AG04450 (cell line): ENCODE measurements at regions of chr3 and their contacts with region 1.

Region 1: GRCh38 chr3:48439820-48440589 is at the starts of genes CCDC51 and TMA7:
- DNase-seq: peak; percentile 77
- H3K4me3 ChIP-seq: peak within 1 kb of the TSS; percentile 91
- H3K27ac ChIP-seq: peak within 1 kb of the TSS; percentile 65
- H3K27me3 ChIP-seq: no peaks in the 10 kb centered on the region
- CTCF ChIP-seq: no peak
- polyA plus RNA-seq, gene CCDC51: 9.5 and 11.1 TPM in 2 replicates
- polyA plus RNA-seq, gene TMA7: 207 and 316 TPM in 2 replicates

Region 2: DNA sequence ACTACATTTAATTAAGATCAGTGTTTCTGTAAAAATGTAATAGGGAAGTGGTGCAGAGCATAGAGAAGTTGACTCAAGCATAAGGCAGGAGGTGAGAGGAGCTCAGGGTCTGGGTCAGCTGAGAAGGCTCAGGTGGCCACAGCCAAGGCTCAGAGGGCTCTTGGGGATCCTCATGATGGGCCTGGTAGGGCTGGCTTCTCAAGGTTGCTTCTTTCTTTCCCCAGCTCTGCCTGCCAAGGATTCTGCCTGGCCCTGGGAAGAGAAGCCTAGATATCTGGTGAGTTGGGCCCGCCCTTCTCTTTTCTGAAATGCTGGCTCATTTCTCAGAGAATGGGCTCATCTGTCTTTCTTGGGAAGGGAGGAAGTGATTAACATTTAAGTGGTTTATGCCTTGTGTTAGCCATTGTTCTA is 192.6 kb before region 1 on chr3:
- CTCF ChIA-PET with region 1: interaction called, 13 read pairs
- POLR2A ChIA-PET with region 1: no interaction called
- DNase-seq: no peak
- H3K4me3 ChIP-seq: no peak overlapping the region
- H3K27ac ChIP-seq: no peak overlapping the region
- H3K27me3 ChIP-seq: no peaks in the 10 kb centered on the region
- CTCF ChIP-seq: no peak

Region 3: GRCh38 chr3:48285132-48285531 is 154.9 kb before region 1 on chr3:
- CTCF ChIA-PET with region 1: interaction called, 100 read pairs
- POLR2A ChIA-PET with region 1: no interaction called
- DNase-seq: no peak
- H3K4me3 ChIP-seq: no peak overlapping the region
- H3K27ac ChIP-seq: no peak overlapping the region
- H3K27me3 ChIP-seq: no peaks in the 10 kb centered on the region
- CTCF ChIP-seq: no peak

Region 4: GRCh38 chr3:48388966-48389365 is 51.0 kb before region 1 on chr3:
- CTCF ChIA-PET with region 1: interaction called, 12 read pairs
- POLR2A ChIA-PET with region 1: no interaction called
- DNase-seq: no peak
- H3K4me3 ChIP-seq: no peak overlapping the region
- H3K27ac ChIP-seq: no peak overlapping the region
- H3K27me3 ChIP-seq: peaks cover 26% of the 10 kb centered on the region
- CTCF ChIP-seq: no peak

Region 5: DNA sequence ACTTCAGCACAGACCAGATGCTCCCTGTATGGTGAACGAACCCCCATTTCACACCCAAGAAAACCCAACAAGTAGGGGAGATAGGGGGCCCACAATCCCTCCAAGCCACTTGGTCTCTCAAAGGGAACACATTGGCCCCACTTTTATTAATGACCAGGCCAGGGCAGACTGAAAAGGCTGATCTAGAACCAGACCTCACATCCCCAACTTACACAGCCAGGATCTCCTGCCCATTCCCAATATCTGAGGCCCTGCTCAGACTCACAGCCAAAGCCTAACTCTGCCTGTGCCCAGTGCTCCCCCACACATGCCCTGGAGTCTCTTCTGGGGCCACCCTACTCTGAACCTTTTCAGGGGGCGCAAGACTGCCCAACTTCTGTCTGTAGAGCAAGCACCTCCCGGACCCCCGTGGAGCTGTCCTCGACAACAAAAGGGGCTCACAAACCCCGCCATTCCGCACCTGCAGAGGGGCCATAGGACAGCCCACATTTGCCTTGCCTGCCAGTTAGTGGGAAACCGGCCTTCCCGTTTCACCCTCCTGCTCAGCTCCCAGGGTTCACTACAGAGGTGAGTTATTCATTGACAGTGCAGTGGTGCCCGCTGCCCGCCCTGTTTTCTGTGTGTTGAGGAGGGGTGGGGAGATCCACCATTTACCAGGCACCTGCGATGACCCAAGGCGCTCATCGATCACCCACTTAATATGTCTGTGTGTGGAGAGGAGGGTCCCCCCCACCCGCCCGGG is 11.7 kb before region 1 on chr3:
- CTCF ChIA-PET with region 1: interaction called, 47 read pairs
- POLR2A ChIA-PET with region 1: no interaction called
- DNase-seq: no peak
- H3K4me3 ChIP-seq: peak overlapping the region; percentile 70
- H3K27ac ChIP-seq: no peak overlapping the region
- H3K27me3 ChIP-seq: no peaks in the 10 kb centered on the region
- CTCF ChIP-seq: no peak

Region 6: DNA sequence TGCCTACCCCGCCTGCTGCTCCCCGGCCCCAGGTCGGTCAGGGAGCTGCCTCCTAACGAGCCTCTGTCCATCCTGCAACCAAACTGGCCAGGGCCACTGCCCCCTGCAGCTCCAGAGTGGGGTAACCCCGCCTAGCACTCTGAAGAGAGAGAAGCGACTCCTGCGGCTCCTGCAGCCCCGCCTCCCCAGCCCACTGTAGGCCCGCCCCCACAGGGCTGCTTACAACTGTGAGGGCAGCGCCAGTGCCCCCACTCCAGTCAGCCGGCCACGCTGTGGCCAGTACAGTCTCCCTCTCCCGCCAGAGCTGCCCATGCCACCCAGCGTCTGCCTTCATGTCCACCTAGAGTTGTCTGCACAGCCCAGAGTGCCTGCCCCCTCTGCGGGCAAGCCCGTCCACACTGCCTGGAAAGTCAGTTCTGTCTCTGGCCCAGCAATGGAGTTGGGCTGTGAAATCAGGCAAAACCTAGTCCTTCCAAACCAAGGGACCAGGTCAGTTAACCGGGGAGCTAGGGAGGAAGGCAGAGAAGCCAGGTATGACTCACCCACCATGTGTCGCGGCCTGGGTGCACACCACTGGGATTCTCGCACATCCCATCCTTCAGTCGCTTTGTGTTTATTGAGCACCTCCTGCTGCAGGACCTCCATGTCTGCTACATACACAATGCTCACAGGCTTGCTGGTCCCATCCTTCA is 121.2 kb after region 1 on chr3:
- CTCF ChIA-PET with region 1: interaction called, 12 read pairs
- POLR2A ChIA-PET with region 1: no interaction called
- DNase-seq: no peak
- H3K4me3 ChIP-seq: peak overlapping the region; percentile 43
- H3K27ac ChIP-seq: peak overlapping the region; percentile 80
- H3K27me3 ChIP-seq: no peaks in the 10 kb centered on the region
- CTCF ChIP-seq: peak; percentile 56

Region 7: DNA sequence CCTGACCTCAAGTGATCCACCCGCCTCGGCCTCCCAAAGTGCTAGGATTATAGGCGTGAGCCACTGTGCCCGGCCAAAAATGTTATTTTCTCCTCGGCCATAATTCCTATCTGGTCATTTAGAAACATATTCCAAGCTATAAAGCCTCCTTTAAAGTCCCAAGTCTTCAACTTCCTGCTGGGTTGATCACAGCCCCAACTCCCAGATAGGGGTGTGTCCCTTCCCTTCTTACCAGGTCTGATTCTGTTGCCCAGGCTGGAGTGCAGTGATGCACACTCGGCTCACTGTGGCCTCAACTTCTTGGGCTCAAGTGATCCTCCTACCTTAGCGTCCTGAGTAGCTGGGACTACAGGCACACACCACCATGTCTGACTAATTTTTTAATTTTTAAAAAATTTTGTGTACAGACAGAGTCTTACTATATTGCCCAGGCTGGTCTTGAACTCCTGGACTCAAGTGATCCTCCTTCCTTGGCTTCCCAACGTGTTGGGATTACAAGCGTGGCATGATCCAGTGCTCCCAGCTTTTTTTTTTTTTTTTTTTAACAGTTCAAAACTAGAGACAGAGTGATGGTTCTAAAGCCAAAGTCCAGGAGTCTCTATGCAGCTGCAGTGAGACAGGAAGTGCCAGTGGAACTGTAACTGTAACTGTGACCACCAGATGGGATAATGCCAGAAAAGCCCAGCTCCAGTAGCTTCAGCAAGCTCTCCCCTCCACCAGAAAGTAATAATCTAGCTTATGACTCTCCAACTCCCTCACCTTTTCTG is 415.9 kb after region 1 on chr3:
- CTCF ChIA-PET with region 1: no interaction called
- POLR2A ChIA-PET with region 1: no interaction called
- DNase-seq: no peak
- H3K4me3 ChIP-seq: no peak overlapping the region
- H3K27ac ChIP-seq: peak overlapping the region; percentile 11
- H3K27me3 ChIP-seq: no peaks in the 10 kb centered on the region
- CTCF ChIP-seq: no peak